A673 (cell line): ENCODE measurements at regions of chr16 and their contacts with region 1.

Region 1: GRCh38 chr16:82031116-82032084 is 3.7 kb upstream of the HSD17B2 start:
- DNase-seq: peak; percentile 77
- H3K4me3 ChIP-seq: no peak overlapping the region
- H3K27ac ChIP-seq: no peak overlapping the region
- H3K4me1 ChIP-seq: peaks cover 5% of the 10 kb centered on the region
- H3K27me3 ChIP-seq: no peaks in the 10 kb centered on the region
- CTCF ChIP-seq: peak; percentile 74

Region 2: DNA sequence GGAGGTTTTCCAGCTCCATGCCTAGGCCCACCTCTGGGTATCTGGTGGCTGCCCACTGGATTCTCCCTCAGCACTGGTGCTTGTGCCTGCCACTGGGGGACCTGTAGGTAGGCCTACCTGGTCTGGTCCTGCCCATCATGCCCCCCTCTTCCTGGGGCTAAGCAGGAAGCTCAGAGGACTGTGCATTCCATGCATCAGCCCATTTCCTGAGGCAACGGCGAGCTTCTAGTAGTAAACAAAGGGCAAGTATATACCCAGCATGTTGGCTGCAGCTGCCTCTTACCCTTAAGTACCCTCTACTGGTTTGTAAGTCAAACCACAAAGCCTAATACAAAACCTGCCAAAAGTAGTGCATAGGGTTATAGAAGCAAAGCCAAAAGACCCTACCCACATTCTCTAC is 57.7 kb before region 1 on chr16:
- CTCF ChIA-PET with region 1: interaction called, 10 read pairs
- POLR2A ChIA-PET with region 1: no interaction called
- intact Hi-C with region 1: no loop called
- DNase-seq: no peak
- H3K4me3 ChIP-seq: no peak overlapping the region
- H3K27ac ChIP-seq: no peak overlapping the region
- H3K4me1 ChIP-seq: no peaks in the 10 kb centered on the region
- H3K27me3 ChIP-seq: no peaks in the 10 kb centered on the region
- CTCF ChIP-seq: no peak

Region 3: DNA sequence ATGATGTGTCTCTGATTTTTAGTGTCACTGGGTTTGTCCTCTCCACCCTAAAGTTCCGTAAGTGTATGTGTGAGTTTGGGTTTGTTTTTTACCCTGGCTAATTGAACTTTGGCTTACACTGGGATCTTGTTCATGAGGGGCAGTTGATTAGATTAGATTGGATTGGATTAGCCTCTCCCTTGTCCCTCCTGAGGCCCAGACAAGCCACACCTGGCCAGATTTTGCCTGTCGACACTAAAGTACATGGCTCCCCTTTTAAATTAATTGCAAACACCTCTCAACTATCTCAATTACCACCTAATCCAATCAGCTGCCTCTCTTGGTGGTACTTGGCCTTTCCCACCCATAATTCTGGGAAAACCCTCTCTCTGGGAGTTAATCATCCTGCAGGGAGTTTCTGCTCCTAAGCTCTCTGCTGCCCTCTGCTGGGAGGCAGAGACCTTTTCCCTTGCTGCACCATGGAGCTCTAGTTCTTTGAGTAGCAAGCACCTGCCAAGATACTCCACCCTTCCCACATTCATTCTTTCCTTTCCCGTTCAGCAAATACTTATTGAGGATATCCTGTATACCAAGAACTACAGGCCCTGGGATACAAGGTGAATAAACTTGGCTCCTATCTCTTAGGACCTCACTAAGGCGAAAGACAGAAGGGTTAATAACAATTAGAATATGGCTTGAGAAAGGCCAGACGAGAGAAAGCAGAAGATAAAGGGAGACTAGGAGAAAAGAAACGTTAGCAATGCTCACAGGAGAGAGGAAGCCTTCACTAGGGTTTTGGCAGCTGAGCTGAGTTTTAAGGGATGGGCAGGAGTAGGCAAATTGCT is 198.6 kb after region 1 on chr16:
- CTCF ChIA-PET with region 1: interaction called, 9 read pairs
- POLR2A ChIA-PET with region 1: no interaction called
- intact Hi-C with region 1: loop called (anchors 1 kb)
- DNase-seq: peak; percentile 84
- H3K4me3 ChIP-seq: no peak overlapping the region
- H3K27ac ChIP-seq: no peak overlapping the region
- H3K4me1 ChIP-seq: no peaks in the 10 kb centered on the region
- H3K27me3 ChIP-seq: no peaks in the 10 kb centered on the region
- CTCF ChIP-seq: peak; percentile 93

Region 4: GRCh38 chr16:83441517-83441916 is 1410.1 kb after region 1 on chr16:
- CTCF ChIA-PET with region 1: no interaction called
- POLR2A ChIA-PET with region 1: no interaction called
- intact Hi-C with region 1: loop called (anchors 10 kb)
- DNase-seq: no peak
- H3K4me3 ChIP-seq: no peak overlapping the region
- H3K27ac ChIP-seq: no peak overlapping the region
- H3K4me1 ChIP-seq: no peaks in the 10 kb centered on the region
- H3K27me3 ChIP-seq: peaks cover 15% of the 10 kb centered on the region
- CTCF ChIP-seq: no peak